Activated CD4-positive, alpha-beta memory T cell treated with anti-CD3 and anti-CD28 coated beads for 36 hours (primary cell): ENCODE measurements at regions of chr15 and their contacts with region 1.

Region 1: DNA sequence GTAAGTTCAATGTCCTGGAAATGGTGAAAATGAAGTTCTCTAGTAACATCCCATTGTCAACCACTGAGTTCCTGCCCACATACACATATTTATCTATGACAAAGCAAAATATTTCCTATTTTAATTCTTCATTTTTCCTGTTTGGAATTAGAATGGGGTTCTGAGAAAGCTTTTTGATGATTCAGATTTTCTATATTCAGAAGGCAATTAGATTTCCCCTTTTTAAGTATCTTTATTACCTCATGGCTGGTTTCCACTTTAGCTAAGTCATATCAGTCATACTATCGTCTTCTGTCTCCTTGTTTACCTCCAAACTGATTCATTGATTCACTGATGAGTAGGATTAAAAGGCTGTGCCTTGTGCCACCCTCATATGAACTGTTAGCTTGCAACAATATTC is 17.9 kb downstream of the ETFA start:
- DNase-seq: no peak
- H3K4me3 Mint-ChIP-seq: no peak overlapping the region
- H3K27ac Mint-ChIP-seq: peak overlapping the region; percentile 64
- H3K4me1 Mint-ChIP-seq: peaks cover 22% of the 10 kb centered on the region
- H3K27me3 Mint-ChIP-seq: no peaks in the 10 kb centered on the region

Region 2: GRCh38 chr15:76382987-76383728 is 89.8 kb after region 1 on chr15:
- CTCF ChIA-PET with region 1: no interaction called
- POLR2A ChIA-PET with region 1: no interaction called
- intact Hi-C with region 1: loop called (anchors 2 kb)
- DNase-seq: no peak
- H3K4me3 Mint-ChIP-seq: no peak overlapping the region
- H3K27ac Mint-ChIP-seq: no peak overlapping the region
- H3K4me1 Mint-ChIP-seq: peaks cover 8% of the 10 kb centered on the region
- H3K27me3 Mint-ChIP-seq: no peaks in the 10 kb centered on the region